ENCODE measurements at regions of chr12 and their contacts with region 1.

Region 1: DNA sequence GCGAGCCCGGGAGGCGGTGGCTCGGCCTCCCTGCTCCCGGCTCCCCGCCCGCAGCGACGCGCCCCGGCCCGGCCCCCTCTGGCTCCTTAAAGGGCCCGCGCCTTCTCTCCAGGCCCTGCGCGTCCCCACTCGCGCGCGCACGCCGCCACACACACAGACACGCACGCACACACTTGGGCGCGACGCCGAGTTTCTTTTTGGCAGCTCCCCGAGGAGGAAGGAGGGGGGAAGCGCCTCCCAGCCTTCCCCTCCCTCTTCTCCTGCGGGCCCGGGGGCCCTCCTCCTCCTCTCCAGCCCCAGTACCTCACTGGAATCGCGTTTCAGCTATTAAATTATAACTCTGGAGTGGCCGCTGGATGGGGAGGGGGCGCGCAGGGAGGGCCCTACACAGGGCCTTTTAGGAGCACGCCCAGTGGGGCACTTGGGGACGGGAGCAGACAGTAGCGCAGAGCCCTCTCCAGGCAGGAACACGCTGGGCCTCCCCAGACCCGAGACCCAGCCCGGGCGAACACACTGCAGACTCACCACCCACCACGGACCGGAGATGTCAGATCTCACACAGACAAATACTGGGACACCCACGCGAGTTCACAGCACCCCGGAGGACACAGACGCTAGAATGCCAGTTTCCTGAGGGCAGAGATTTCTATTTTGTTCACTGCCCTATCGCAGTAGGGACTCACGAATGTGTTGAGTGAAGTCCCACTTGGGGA is 405 bp upstream of the NCOR2 start:
- DNase-seq: peak; percentile 95 to 96
- ATAC-seq: peak; percentile 82 to 90 (median 86)
- H3K4me3 ChIP-seq: peak overlapping the region; percentile 65
- H3K27ac ChIP-seq: peak overlapping the region; percentile 85
- H3K4me1 ChIP-seq: peaks cover 29% of the 10 kb centered on the region
- H3K27me3 ChIP-seq: no peaks in the 10 kb centered on the region
- CTCF ChIP-seq: no peak

Region 2: DNA sequence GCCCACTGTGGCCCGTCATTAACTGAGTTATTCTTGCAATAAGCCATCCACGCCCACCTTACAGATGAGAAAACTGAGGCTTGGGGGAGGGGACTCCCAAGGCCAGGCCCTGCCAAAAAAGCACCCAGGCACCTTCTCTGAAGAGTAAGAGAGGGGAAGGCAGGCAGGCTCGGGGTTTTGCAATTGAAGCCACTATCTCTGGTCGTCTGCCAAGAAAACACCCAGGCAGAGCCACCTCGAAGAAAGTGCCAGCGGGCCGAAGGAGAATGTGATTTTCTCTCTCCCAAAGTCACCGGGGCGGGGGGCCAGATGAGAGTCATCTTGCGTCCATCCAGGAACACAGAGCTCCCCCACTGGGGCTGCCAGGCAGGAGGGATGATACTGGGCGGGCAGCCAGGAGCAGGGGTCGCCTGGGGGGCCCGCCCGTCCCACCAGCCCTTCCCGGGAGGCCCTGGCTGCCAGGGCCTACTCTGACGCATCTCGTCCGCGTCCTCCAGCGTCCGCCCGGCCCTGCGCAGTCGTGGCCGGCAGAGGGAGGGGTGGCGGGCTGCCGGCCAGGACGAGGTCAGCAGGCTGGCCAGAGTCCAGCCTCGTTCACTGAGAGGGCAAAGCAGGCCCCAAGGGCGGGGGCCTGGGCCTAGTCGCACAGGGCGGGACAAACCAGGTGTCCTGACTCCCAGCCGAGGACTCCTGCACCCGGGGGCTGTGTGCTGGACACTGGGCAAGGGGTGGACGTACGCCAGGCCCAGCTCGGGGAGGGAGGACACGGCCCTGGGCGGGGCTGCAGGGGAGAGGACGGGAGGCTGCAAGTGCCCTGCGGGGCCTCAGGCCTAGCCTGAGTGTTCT is 198.5 kb before region 1 on chr12:
- intact Hi-C with region 1: loop called in 1 of 2 experiments (anchors 2 kb)
- DNase-seq: peak; percentile 94 to 99
- ATAC-seq: peak; percentile 85 to 87 (median 86)
- H3K4me3 ChIP-seq: peak overlapping the region; percentile 35
- H3K27ac ChIP-seq: peak overlapping the region; percentile 95
- H3K4me1 ChIP-seq: peaks cover 71% of the 10 kb centered on the region
- H3K27me3 ChIP-seq: no peaks in the 10 kb centered on the region
- CTCF ChIP-seq: peak; percentile 56

Region 3: GRCh38 chr12:124388679-124389536 is 178.9 kb before region 1 on chr12:
- intact Hi-C with region 1: no loop called
- DNase-seq: peak; percentile 92 to 96
- ATAC-seq: peak; percentile 52 to 65 (median 55)
- H3K4me3 ChIP-seq: peak overlapping the region; percentile 79
- H3K27ac ChIP-seq: peak overlapping the region; percentile 96
- H3K4me1 ChIP-seq: peaks cover 75% of the 10 kb centered on the region
- H3K27me3 ChIP-seq: no peaks in the 10 kb centered on the region
- CTCF ChIP-seq: no peak

Region 4: GRCh38 chr12:124453419-124454351 is 114.1 kb before region 1 on chr12:
- intact Hi-C with region 1: loop called in 1 of 2 experiments (anchors 5 kb)
- DNase-seq: peak; percentile 93 to 97
- ATAC-seq: peak; percentile 82 to 86 (median 82)
- H3K4me3 ChIP-seq: peak overlapping the region; percentile 40
- H3K27ac ChIP-seq: peak overlapping the region; percentile 87
- H3K4me1 ChIP-seq: peaks cover 52% of the 10 kb centered on the region
- H3K27me3 ChIP-seq: no peaks in the 10 kb centered on the region
- CTCF ChIP-seq: no peak

Region 5: DNA sequence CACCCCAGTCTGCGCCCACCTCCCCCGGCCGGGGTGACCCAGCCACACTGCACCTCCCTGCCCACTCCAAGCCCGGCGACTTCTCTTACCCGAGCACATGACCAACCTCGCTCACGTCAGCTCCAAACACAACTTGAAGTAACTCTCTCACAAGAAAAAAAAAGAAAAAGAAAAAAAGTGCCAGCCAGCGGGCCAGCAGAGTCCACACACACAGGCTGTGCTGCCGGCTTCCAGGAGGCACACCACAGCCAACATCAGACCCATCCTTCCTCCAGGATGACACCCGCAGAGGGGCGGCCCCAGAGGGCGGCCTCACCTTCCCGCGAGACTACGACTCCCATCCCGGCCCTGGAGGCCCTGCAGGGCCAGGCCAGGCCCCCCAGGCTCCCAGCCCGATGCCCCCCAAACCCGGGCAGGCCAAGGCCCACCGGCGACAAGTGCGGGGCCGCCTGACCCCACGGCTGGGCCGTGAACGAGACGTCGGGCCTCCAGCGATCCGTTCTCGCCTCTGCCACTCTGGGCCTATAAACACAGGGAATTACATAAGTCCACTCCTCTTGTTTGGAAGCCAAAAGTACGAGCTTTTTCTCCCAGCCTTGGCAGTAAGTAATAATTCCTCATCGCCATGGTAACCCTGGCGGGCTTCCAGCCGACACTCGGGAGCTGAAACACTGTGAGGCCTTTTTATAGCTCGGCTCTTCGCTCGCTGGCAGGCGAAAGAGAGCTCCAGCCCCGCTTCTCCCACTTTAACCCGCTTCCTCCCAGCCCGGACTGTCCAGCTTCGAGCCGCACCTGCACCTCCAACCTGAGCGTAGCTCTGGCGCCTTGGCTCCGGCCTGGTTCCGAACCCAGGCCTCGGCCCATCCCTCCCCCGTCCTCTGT is 49.5 kb before region 1 on chr12:
- intact Hi-C with region 1: loop called (anchors 5 kb)
- DNase-seq: peak; percentile 98 to 99
- ATAC-seq: peak; percentile 70 to 74 (median 71)
- H3K4me3 ChIP-seq: peak overlapping the region; percentile 79
- H3K27ac ChIP-seq: peak overlapping the region; percentile 97
- H3K4me1 ChIP-seq: peaks cover 77% of the 10 kb centered on the region
- H3K27me3 ChIP-seq: no peaks in the 10 kb centered on the region
- CTCF ChIP-seq: no peak

Region 6: GRCh38 chr12:124651516-124652273 is 83.9 kb after region 1 on chr12:
- intact Hi-C with region 1: loop called in 1 of 2 experiments (anchors 5 kb)
- DNase-seq: peak; percentile 39 to 81
- ATAC-seq: peak in 1 of 4 donors; percentile 12
- H3K4me3 ChIP-seq: no peak overlapping the region
- H3K27ac ChIP-seq: no peak overlapping the region
- H3K4me1 ChIP-seq: peaks cover 22% of the 10 kb centered on the region
- H3K27me3 ChIP-seq: no peaks in the 10 kb centered on the region
- CTCF ChIP-seq: no peak

Region 7: DNA sequence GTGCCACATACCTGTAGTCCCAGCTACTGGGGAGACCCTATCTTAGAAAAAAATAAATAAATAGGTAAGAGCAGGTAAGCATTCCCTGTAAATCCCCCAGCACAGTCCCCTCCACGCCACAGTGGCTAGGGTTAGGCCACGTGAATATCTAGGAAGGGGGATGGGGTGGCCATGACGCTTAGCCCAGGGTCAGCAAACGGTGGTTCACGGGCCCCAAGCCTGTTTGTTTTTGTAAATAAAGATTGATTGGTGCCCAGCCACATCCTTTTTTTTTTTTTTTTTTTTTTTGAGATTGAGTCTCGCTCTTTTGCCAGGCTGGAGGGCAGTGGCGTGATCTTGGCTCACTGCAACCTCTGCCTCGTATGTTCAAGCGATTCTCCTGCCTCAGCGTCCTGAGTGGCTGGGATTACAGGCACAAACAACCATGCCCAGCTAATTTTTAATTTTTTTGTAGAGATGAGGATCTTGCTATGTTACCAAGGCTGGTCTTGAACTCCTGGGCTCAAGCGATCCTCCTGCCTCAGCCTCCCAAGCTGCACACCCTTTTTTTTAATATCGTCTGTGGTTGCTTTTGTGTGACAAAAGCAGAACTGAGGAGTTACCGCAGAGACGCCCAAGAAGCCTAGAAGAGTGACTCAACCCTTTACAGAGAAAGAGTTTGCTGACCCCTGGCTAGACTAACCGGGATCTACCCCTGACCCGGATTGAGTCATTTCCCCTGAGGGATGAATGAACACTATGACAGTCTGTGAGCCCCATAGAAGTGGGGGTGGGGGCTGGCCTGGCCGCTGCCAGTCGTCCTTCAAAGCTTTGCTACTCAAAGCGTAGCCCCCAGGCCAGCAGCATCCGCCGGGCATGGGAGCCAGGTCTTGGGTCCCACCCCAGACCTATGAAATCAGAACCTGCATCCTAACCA is 113.3 kb after region 1 on chr12:
- intact Hi-C with region 1: loop called in 1 of 2 experiments (anchors 5 kb)
- DNase-seq: peak; percentile 73 to 80
- ATAC-seq: peak; percentile 14 to 72 (median 58)
- H3K4me3 ChIP-seq: no peak overlapping the region
- H3K27ac ChIP-seq: peak overlapping the region; percentile 82
- H3K4me1 ChIP-seq: peaks cover 54% of the 10 kb centered on the region
- H3K27me3 ChIP-seq: no peaks in the 10 kb centered on the region
- CTCF ChIP-seq: peak; percentile 31